Mammary epithelial cell (primary cell): ENCODE measurements at regions of chr15 and their contacts with region 1.

Region 1: DNA sequence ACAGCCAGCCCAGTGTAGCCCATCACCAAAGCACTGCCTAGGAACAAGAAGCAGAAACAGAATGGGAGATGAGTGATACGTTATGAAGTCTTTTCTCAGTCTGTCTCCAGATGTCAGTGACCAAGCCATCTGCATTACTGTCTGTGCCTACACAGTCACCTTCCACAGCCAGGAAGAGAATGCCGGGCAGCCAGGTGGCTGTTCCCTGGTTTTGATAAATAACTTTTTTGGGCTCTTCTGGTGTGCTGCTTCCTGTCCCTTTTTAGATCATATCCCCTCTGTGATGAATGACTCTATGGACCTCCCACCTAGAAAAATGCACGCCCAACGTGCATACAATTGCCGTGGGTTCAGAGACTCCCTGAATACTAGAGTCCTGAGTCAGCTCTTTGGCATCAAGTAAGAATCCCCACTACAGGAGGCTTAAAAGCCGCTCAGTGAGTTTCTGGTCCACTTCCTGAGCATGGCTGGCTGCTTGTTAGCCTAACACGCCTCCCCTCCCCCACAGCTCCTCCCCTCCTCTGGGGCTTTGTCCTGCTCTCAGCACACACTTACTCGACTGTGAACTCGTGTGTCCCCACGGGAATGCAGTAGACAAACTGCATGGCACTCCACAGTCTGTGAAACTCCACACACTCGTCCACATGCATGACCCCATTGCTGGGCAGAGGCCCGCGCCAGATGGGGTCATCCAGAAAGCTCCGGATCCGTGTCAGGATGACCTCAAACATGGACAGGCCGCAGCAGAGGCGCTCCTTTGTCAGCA is 34.7 kb downstream of the NIPA2 start:
- DNase-seq: no peak
- H3K4me3 ChIP-seq: no peak overlapping the region
- H3K27ac ChIP-seq: no peak overlapping the region
- H3K4me1 ChIP-seq: peaks cover 8% of the 10 kb centered on the region
- H3K27me3 ChIP-seq: no peaks in the 10 kb centered on the region
- CTCF ChIP-seq: no peak

Region 2: GRCh38 chr15:22795206-22796063 is 77.7 kb before region 1 on chr15:
- CTCF ChIA-PET with region 1: no interaction called
- dilution Hi-C with region 1: no loop called
- in situ Hi-C with region 1: no loop called
- intact Hi-C with region 1: no loop called
- DNase-seq: no peak
- H3K4me3 ChIP-seq: no peak overlapping the region
- H3K27ac ChIP-seq: no peak overlapping the region
- H3K4me1 ChIP-seq: no peaks in the 10 kb centered on the region
- H3K27me3 ChIP-seq: no peaks in the 10 kb centered on the region
- CTCF ChIP-seq: no peak

Region 3: DNA sequence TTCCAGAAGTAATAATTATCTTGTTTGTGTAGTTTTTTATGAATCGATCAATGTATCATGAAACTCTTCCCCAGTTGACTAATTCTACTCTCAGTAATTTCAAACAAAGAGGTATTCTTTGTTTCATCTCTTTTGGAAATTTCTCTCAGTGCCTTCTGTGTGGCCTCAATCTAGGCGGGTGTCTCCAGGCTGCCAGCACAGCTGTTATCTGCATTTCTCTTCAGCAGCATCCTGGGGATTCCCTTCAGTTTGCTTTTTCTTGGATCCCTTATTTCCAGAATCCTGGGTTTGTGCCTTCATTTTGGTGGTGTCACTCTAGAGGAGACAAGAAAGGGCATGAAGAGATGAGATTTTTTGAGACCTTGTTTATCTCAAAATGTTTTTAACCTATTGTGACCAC is 12.0 kb before region 1 on chr15:
- CTCF ChIA-PET with region 1: no interaction called
- dilution Hi-C with region 1: no loop called
- in situ Hi-C with region 1: no loop called
- intact Hi-C with region 1: no loop called
- DNase-seq: no peak
- H3K4me3 ChIP-seq: no peak overlapping the region
- H3K27ac ChIP-seq: no peak overlapping the region
- H3K4me1 ChIP-seq: no peaks in the 10 kb centered on the region
- H3K27me3 ChIP-seq: no peaks in the 10 kb centered on the region
- CTCF ChIP-seq: no peak

Region 4: GRCh38 chr15:22918056-22918455 is 44.9 kb after region 1 on chr15:
- CTCF ChIA-PET with region 1: no interaction called
- dilution Hi-C with region 1: no loop called
- in situ Hi-C with region 1: no loop called
- intact Hi-C with region 1: no loop called
- DNase-seq: peak; percentile 77
- H3K4me3 ChIP-seq: no peak overlapping the region
- H3K27ac ChIP-seq: no peak overlapping the region
- H3K4me1 ChIP-seq: peaks cover 11% of the 10 kb centered on the region
- H3K27me3 ChIP-seq: no peaks in the 10 kb centered on the region
- CTCF ChIP-seq: no peak

Region 5: DNA sequence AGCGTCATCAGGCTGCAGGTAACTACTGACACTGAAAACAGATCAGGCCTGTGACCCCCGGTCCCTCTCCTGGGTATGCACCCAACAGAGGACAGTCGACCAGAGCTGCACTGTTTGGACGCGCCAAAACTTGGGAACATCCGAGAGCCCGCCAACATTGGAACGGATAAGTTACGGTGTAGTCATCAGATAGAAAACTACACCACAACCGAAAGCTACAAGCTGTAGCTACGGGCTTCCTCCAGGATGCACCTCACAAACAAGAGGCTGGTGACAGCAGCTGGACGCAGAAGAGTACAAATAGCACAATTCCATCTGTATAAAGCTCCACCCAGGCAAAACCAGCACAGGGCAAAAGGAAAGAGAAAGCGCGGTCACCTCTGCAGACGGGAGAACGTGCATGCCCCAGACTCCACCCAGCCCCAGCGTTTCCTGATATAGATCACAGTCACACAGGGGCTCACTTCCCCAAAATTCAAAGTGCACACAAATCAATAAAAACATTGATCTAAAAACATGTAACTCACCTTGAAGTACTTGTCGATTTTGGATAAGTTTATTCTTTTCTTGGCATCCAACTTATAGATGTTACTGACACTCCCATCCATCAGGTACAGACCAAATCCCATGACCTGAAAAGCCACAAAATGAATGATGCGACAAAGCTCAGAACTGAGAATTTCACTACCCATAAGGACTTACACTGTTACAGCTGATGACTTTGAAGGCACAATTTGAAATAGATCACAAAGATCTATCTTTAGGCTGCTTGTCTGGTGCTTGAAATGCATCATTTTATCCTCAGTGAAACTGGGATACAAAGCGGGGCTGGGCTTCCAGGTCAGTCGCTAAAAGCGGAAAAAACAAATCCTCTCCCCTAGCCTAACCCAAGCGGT is 63.7 kb after region 1 on chr15:
- CTCF ChIA-PET with region 1: no interaction called
- dilution Hi-C with region 1: no loop called
- in situ Hi-C with region 1: no loop called
- intact Hi-C with region 1: loop called (anchors 10 kb)
- DNase-seq: no peak
- H3K4me3 ChIP-seq: no peak overlapping the region
- H3K27ac ChIP-seq: no peak overlapping the region
- H3K4me1 ChIP-seq: no peaks in the 10 kb centered on the region
- H3K27me3 ChIP-seq: no peaks in the 10 kb centered on the region
- CTCF ChIP-seq: no peak

Region 6: DNA sequence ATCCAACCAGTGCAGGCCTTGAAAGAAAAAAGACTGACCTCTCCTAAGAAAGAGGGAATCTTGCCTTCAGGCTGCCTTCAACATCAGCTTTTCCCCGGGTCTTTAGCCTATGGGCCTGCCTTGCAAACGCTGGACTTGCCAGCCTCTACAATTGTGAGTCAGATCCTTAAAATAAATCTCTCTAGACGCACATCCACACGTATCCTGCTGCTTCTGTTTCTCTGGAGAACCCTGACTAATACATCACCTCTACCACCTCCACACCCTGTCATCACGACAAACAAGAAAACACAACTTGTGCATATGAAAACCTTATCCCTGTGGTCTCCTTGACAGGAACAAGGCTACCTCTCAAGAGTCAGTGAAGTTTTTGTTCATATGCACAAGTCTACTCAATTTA is 95.2 kb after region 1 on chr15:
- CTCF ChIA-PET with region 1: interaction called, 11 read pairs
- dilution Hi-C with region 1: no loop called
- in situ Hi-C with region 1: no loop called
- intact Hi-C with region 1: no loop called
- DNase-seq: peak; percentile 89
- H3K4me3 ChIP-seq: no peak overlapping the region
- H3K27ac ChIP-seq: peak overlapping the region; percentile 51
- H3K4me1 ChIP-seq: peaks cover 30% of the 10 kb centered on the region
- H3K27me3 ChIP-seq: no peaks in the 10 kb centered on the region
- CTCF ChIP-seq: no peak